ENCODE measurements at regions of chr5 and their contacts with region 1.

Region 1: DNA sequence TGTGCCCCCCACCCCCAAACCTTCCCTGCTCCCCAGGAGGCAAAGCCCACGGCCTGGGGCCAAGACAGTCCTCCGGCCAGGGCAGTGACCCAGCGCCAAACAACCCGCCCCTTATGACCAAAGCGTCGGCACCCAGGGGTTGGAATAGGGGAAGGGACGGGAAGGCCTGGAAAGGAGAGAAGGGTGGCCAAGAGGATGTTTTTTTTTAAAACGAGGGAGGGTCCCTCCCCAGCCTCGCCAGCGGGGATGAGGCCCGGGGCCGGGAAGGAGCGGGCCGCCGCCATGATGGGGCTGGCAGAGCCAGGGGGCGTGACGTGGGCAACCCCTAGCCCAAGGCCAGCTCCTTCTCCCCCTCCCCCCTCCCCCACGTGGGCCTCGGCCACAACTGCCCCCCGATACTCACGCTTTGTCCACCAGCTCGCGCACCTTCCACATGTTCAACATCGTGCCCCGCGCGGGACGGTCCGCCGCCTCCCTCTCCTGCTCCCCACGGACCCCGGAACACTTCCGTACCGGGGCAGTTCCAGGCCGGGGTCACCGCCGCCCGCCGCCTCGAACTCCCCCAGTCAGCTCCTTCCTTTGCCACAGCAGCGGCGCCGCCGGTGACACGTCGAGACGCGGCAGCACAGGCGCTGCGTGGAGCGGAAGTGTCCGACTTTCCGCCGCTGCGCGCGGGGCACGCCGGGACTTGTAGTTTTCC is at the start of gene CLINT1:
- DNase-seq: peak; percentile 89 to 91
- ATAC-seq: peak; percentile 96 to 97
- H3K4me3 ChIP-seq: peak within 1 kb of the TSS; percentile 70
- H3K27ac ChIP-seq: peak within 1 kb of the TSS; percentile 96 to 97
- H3K4me1 ChIP-seq: peaks cover 29% of the 10 kb centered on the region; the same call in 2 of the 3 replicates
- CTCF ChIP-seq: no peak
- EP300 ChIP-seq: no peak
- POLR2A ChIP-seq: peak; percentile 69
- RAD21 ChIP-seq: no peak
- polyA plus RNA-seq, gene CLINT1: 185 and 240 TPM in 2 replicates

Region 2: GRCh38 chr5:157845894-157846598 is 12.6 kb before region 1 on chr5:
- CTCF ChIA-PET with region 1: interaction called, 28 read pairs
- POLR2A ChIA-PET with region 1: no interaction called
- DNase-seq: no peak
- ATAC-seq: peak in 1 of 2 experiments; percentile 58; a peak in 3 of 6 replicates
- H3K4me3 ChIP-seq: no peak overlapping the region
- H3K27ac ChIP-seq: no peak overlapping the region
- H3K4me1 ChIP-seq: peaks cover 20% of the 10 kb centered on the region
- CTCF ChIP-seq: no peak
- EP300 ChIP-seq: no peak
- POLR2A ChIP-seq: no peak
- RAD21 ChIP-seq: no peak

Region 3: GRCh38 chr5:157877821-157878220 is 19.1 kb after region 1 on chr5:
- CTCF ChIA-PET with region 1: interaction called, 20 read pairs
- POLR2A ChIA-PET with region 1: no interaction called
- DNase-seq: no peak
- ATAC-seq: no peak
- H3K4me3 ChIP-seq: no peak overlapping the region
- H3K27ac ChIP-seq: peak overlapping the region in 1 of 2 experiments; percentile 6; a peak in 2 of 6 replicates
- H3K4me1 ChIP-seq: no peaks in the 10 kb centered on the region
- CTCF ChIP-seq: no peak
- EP300 ChIP-seq: no peak
- POLR2A ChIP-seq: no peak
- RAD21 ChIP-seq: no peak

Region 4: GRCh38 chr5:157924931-157925729 is 66.5 kb after region 1 on chr5:
- CTCF ChIA-PET with region 1: interaction called, 12 read pairs
- POLR2A ChIA-PET with region 1: no interaction called
- DNase-seq: peak in 1 of 2 experiments; percentile 17
- ATAC-seq: peak in 1 of 2 experiments; percentile 24; a peak in 3 of 6 replicates
- H3K4me3 ChIP-seq: no peak overlapping the region
- H3K27ac ChIP-seq: 0 out of 6 replicates have a peak overlapping the region, but pooled peaks of 1 of the 2 experiments have one; percentile 1
- H3K4me1 ChIP-seq: peaks cover 13% of the 10 kb centered on the region; the same call in 2 of the 3 replicates
- CTCF ChIP-seq: no peak
- EP300 ChIP-seq: no peak
- POLR2A ChIP-seq: no peak
- RAD21 ChIP-seq: no peak

Region 5: GRCh38 chr5:157994906-157995519 is 136.3 kb after region 1 on chr5:
- CTCF ChIA-PET with region 1: interaction called, 14 read pairs
- POLR2A ChIA-PET with region 1: no interaction called
- DNase-seq: peak; percentile 71 to 83
- ATAC-seq: peak; percentile 98 to 99
- H3K4me3 ChIP-seq: no peak overlapping the region
- H3K27ac ChIP-seq: no peak overlapping the region
- H3K4me1 ChIP-seq: 0 out of 3 replicates have a peak, but pooled peaks cover 3% of the 10 kb centered on the region
- CTCF ChIP-seq: peak; percentile 74
- EP300 ChIP-seq: no peak
- POLR2A ChIP-seq: no peak
- RAD21 ChIP-seq: peak; percentile 74 to 78

Region 6: DNA sequence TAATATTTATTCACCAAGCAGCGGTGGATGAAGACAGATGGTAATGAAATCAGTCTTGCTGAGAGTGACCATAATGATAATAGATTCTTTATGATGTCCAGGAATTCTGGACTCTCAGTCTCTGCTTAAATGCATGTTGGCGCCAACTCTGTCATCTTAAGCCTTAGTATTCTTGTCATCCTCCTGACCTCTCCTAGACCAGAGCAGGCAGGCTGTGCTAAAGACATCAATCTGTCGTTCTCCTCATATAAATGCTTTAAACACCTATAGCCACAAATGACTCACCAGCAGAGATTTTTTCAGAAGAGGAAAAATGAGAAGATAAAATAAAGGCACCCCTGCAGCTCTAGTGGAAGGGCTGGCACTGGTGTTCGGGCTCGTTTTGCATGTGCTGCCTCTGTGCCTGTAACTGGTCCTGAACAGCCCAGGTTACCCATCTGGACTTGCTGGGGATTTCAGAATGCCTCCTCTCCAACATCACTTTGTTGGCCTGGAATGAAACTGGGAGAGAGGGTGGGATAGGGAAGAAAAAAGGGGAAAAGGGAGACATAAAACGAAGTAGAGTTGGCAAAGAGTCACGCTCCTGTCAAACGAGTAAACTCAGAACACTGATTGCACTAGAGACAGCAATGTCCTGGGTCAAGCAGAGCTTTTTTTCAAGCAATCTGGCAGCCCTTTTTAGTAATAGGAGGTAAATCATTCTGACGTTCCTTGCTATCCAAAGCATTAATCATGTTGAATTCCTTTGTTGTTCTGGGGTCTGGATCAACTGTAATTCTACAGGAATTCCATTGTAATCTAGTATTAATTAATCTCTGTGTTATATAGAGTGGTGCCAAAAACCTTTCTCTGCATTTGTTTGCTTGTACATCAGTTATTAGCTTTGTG is 195.8 kb after region 1 on chr5:
- CTCF ChIA-PET with region 1: no interaction called
- POLR2A ChIA-PET with region 1: no interaction called
- DNase-seq: no peak
- ATAC-seq: no peak
- H3K4me3 ChIP-seq: no peak overlapping the region
- H3K27ac ChIP-seq: no peak overlapping the region
- H3K4me1 ChIP-seq: no peaks in the 10 kb centered on the region
- CTCF ChIP-seq: no peak
- EP300 ChIP-seq: no peak
- POLR2A ChIP-seq: no peak
- RAD21 ChIP-seq: no peak

Measured in A549 (cell line).